Activated naive CD4-positive, alpha-beta T cell treated with anti-CD3 and anti-CD28 coated beads, Interleukin-2, amount 10 ng/mL, durations not matched to agents 7 days and 5 days (primary cell): ENCODE measurements at regions of chr1 and their contacts with region 1.

Region 1: GRCh38 chr1:202160377-202160940 is at the start of gene PTPN7:
- DNase-seq: peak; percentile 84
- H3K4me3 Mint-ChIP-seq: peak within 1 kb of the TSS; percentile 93
- H3K27ac Mint-ChIP-seq: peak within 1 kb of the TSS; percentile 99
- H3K4me1 Mint-ChIP-seq: peaks cover 84% of the 10 kb centered on the region
- H3K27me3 Mint-ChIP-seq: no peaks in the 10 kb centered on the region

Region 2: GRCh38 chr1:202085682-202086404 is 74.6 kb before region 1 on chr1:
- CTCF ChIA-PET with region 1: no interaction called
- DNase-seq: no peak
- H3K4me3 Mint-ChIP-seq: no peak overlapping the region
- H3K27ac Mint-ChIP-seq: no peak overlapping the region
- H3K4me1 Mint-ChIP-seq: no peaks in the 10 kb centered on the region
- H3K27me3 Mint-ChIP-seq: peaks cover 27% of the 10 kb centered on the region

Region 3: DNA sequence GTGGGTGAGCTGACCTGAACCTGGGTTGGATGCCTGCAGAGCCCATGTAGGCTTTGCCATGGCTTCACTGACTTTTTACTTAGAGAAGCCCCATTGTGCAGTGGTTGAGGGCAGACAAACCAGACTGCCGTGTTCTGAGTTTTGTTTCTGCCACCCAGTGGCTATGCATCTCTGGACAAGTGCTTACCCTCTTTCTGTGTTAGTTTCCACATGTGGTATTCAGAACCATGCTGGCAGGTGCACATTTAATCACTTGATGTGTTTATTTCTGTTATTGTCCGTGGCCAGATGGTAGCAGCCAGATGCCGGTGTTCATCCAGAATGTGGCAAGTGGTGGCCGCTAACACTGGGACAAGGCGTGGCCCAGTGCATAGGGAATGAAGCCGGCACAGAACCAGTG is 10.3 kb after region 1 on chr1:
- CTCF ChIA-PET with region 1: interaction called, 22 read pairs
- DNase-seq: no peak
- H3K4me3 Mint-ChIP-seq: no peak overlapping the region
- H3K27ac Mint-ChIP-seq: no peak overlapping the region
- H3K4me1 Mint-ChIP-seq: peaks cover 15% of the 10 kb centered on the region
- H3K27me3 Mint-ChIP-seq: peaks cover 22% of the 10 kb centered on the region

Region 4: DNA sequence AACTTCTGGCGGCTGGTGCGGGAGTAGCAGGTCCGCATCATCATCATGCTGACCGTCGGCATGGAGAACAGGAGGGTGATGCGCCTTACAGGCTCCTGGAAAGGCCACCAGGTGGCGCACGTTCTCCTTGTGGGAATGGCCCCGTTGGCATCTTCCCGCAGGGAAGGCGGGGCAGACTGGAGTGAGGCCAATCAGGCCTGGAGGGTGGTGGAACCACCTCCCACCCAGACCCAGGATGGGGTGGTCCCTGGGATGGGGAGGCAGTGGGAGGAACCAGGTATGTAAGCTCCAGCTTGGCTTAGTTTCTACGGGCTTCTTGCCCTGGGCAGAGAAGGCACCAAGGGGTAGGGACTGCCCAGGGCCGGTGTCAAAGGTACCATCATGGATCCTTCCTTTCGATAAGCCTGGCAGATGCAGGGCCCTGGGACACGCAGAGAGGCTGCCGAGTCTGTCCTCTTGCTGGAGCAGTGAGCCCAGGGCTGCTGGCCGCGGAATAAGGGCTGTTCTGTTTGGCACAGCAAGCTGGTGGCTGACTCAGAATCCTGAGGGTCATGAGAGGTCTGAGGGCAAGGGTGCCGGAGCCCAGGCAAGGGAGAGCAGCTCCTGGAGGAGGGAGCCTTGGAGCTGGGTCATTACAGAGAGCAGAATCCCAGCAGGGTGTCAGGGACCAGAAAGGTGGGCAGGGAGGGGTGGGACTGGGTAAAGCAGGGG is 24.4 kb after region 1 on chr1:
- CTCF ChIA-PET with region 1: interaction called, 34 read pairs
- DNase-seq: peak; percentile 79
- H3K4me3 Mint-ChIP-seq: no peak overlapping the region
- H3K27ac Mint-ChIP-seq: no peak overlapping the region
- H3K4me1 Mint-ChIP-seq: peaks cover 10% of the 10 kb centered on the region
- H3K27me3 Mint-ChIP-seq: peaks cover 79% of the 10 kb centered on the region

Region 5: DNA sequence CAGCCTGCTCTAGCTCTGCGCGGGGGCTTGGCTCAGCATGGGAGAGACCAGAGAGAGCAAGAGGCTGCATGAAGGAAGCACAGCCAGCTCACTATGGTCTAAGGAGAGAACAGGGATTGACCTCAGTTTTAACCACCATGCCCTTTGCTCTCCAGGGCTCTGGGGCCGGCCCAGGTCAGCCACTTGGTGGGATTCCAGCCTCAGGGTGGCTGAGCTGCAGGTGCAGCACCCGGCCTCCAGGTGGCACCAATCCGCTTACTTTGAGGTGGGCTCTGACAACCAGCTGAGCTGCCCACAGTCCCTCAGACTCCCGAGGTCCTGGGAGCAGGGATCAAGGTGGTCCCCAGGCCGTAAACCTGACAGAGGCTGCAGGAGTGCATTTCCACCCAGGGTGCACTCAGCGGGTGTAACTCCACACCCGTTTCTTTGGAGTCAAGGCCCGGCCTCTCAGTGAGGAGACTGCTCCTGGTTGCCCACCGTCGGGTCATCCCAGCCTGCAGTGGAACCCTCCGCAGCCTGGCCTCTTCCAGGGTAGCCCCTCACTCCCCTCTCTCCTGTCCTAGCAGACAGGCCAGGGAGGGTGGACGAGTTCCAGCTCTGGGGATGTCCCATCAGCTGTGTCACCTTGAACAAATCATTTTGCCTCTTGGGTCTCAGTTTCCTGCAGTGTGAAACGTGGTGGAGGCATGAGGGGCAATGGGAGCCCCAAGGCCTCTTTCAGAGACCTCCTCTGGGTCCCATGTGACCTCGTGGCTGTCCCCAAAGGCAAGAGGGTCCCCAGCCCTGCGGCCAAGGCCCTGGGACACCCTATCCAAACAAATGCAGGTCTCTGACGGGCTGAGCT is 32.5 kb after region 1 on chr1:
- CTCF ChIA-PET with region 1: interaction called, 12 read pairs
- DNase-seq: peak; percentile 70
- H3K4me3 Mint-ChIP-seq: no peak overlapping the region
- H3K27ac Mint-ChIP-seq: no peak overlapping the region
- H3K4me1 Mint-ChIP-seq: peaks cover 3% of the 10 kb centered on the region
- H3K27me3 Mint-ChIP-seq: peaks cover 64% of the 10 kb centered on the region